Activated CD8-positive, alpha-beta memory T cell treated with anti-CD3 and anti-CD28 coated beads, Interleukin-2, amount 10 ng/mL, durations not matched to agents 7 days and 5 days (primary cell): ENCODE measurements at regions of chr1 and their contacts with region 1.

Region 1: DNA sequence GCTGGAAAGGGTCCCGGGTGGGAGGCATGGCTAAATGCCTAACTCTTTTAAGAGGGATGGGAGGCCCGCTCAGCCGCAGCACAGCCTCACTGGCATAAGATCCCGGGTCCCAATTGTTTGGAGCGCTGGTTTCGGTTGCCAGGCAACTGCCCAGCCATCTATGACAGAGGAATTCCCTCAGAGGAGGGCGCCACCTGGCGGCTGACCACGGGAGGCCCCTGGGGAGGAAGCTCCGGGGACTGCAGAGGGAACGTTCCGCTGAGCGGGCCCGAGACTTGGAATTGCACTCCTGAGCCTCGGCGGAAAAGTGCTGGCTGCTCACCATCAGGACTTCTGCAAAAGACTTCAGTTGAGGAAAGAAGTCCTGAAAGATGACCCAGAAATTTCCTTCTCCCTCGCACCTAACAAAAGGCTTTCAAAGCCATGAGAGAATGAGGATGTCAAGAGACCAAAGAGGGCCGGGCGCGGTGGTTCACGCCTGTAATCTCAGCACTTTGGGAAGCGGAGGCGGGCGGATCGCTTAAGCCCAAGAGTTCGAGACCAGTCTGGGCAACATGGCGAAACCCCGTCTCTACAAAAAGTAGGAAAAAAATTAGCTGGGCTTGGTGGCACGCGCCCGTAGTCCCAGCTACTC is 1.1 kb upstream of the ELAPOR1 start:
- DNase-seq: peak; percentile 93
- ATAC-seq: peak; percentile 71
- H3K4me3 Mint-ChIP-seq: peak overlapping the region; percentile 77
- H3K27ac Mint-ChIP-seq: peak overlapping the region; percentile 48
- H3K4me1 Mint-ChIP-seq: peaks cover 28% of the 10 kb centered on the region
- H3K27me3 Mint-ChIP-seq: peaks cover 34% of the 10 kb centered on the region

Region 2: DNA sequence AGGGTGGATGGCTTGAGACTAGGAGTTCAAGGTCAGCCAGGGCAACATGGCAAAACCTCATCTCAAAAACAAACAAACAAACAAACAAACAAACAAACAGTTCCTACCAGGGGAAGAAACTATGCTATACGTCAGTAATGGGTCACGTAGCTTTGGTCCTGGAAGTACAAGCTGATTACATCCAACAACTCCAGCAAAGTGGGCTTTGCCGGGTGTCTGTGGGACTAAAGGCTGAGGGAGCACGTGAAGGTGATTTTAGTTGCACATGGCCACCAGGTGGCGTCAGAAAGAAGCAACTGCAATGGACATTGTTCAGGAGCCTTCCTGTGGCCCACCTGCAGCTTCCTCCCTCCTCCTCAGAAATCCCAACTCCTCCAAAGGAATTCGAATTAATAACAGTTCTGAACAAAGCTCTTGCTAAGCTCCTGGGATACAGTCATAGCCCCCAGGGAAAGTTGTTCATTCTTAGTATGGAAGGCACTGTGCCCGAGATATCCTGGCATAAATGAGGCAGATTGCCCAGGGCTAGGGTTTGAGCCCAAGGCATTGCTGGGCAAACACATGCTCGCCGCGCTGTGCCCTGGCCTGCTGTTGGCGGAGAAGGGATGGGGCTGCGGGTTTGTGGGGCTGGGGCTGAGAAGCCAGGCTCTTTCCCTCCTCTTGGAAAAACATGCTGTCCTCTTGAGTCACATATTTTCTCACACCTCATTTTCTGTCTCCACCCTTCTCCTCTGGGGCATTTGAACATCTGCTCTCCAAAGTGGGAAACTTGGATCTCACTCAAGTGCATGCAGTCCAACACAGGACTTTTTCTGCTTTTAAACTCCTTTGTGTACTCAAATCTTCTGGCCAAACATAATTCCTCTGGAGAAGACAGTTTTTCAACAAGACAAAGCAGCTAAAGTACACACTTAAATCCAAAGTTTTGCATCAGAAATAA is 284.5 kb before region 1 on chr1:
- CTCF ChIA-PET with region 1: interaction called, 10 read pairs
- DNase-seq: peak; percentile 81
- ATAC-seq: peak; percentile 84
- H3K4me3 Mint-ChIP-seq: no peak overlapping the region
- H3K27ac Mint-ChIP-seq: no peak overlapping the region
- H3K4me1 Mint-ChIP-seq: peaks cover 9% of the 10 kb centered on the region
- H3K27me3 Mint-ChIP-seq: no peaks in the 10 kb centered on the region

Region 3: DNA sequence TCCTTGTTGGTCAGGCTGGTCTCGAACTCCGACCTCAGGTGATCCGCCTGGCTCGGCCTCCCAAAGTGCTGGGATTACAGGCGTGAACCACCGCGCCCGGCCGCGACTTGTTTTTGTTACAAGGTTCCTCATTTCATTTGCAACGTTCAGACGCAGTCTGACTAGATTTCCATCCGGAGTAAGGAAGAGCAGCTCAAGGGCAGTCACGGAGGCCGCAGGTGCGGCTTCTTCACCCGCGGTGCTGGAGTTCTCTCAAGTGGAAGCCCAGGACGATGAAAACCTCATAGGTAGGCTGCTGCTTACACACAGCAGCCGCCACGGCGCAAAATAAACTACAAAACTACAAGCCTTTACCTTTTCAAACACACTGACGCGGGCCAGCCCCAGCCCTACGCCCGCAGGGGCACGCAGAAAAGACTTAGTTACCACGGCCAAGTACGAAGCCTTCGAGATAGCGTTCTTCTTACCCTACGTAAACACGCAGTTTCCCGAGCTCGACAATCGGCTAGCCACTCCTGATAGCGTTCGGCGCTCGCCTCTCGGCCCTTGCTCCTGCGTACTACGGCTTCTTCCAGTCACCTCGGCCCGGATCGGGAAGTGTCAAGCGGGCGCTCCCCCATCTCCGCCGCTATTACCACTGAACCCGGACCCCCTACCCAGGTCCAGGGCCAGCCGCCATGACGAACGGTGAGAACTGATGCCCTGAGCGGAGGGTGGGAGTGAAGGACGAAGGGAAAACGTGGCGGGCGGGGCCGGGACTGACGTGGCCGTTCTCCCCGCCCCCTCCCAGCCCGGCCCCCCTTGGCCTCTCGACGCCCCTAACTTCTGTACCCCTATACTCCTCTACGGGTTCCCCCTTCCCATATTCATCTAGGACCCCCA is 22.3 kb before region 1 on chr1 and contains the start of gene TMEM167B:
- CTCF ChIA-PET with region 1: interaction called, 25 read pairs
- DNase-seq: peak; percentile 95
- ATAC-seq: peak; percentile 96
- H3K4me3 Mint-ChIP-seq: peak within 1 kb of the TSS; percentile 98
- H3K27ac Mint-ChIP-seq: peak within 1 kb of the TSS; percentile 97
- H3K4me1 Mint-ChIP-seq: peaks cover 29% of the 10 kb centered on the region
- H3K27me3 Mint-ChIP-seq: no peaks in the 10 kb centered on the region
- total RNA-seq, gene TMEM167B: 21.8 to 27.0 TPM

Region 4: GRCh38 chr1:109099938-109100773 is 12.6 kb before region 1 on chr1:
- CTCF ChIA-PET with region 1: interaction called, 114 read pairs
- DNase-seq: peak; percentile 98
- ATAC-seq: peak; percentile 94
- H3K4me3 Mint-ChIP-seq: peak overlapping the region; percentile 96
- H3K27ac Mint-ChIP-seq: peak overlapping the region; percentile 93
- H3K4me1 Mint-ChIP-seq: peaks cover 14% of the 10 kb centered on the region
- H3K27me3 Mint-ChIP-seq: no peaks in the 10 kb centered on the region

Region 5: GRCh38 chr1:109161858-109162606 is 49.3 kb after region 1 on chr1:
- CTCF ChIA-PET with region 1: interaction called, 12 read pairs
- DNase-seq: peak; percentile 83
- ATAC-seq: peak; percentile 92
- H3K4me3 Mint-ChIP-seq: peak overlapping the region; percentile 52
- H3K27ac Mint-ChIP-seq: peak overlapping the region; percentile 82
- H3K4me1 Mint-ChIP-seq: peaks cover 32% of the 10 kb centered on the region
- H3K27me3 Mint-ChIP-seq: no peaks in the 10 kb centered on the region

Region 6: GRCh38 chr1:109193653-109194590 is 81.2 kb after region 1 on chr1:
- CTCF ChIA-PET with region 1: interaction called, 13 read pairs
- DNase-seq: peak; percentile 78
- ATAC-seq: peak; percentile 90
- H3K4me3 Mint-ChIP-seq: no peak overlapping the region
- H3K27ac Mint-ChIP-seq: no peak overlapping the region
- H3K4me1 Mint-ChIP-seq: peaks cover 15% of the 10 kb centered on the region
- H3K27me3 Mint-ChIP-seq: no peaks in the 10 kb centered on the region

Region 7: GRCh38 chr1:109274488-109275476 is 162.0 kb after region 1 on chr1:
- CTCF ChIA-PET with region 1: no interaction called
- DNase-seq: no peak
- ATAC-seq: no peak
- H3K4me3 Mint-ChIP-seq: no peak overlapping the region
- H3K27ac Mint-ChIP-seq: no peak overlapping the region
- H3K4me1 Mint-ChIP-seq: peaks cover 10% of the 10 kb centered on the region
- H3K27me3 Mint-ChIP-seq: no peaks in the 10 kb centered on the region